ENCODE measurements at regions of chr3 and their contacts with region 1.

Region 1: GRCh38 chr3:66450390-66451022 is 50.3 kb downstream of the LRIG1 start:
- DNase-seq: peak; percentile 87
- H3K4me3 ChIP-seq: no peak overlapping the region
- H3K27ac ChIP-seq: peak overlapping the region; percentile 63 to 74
- H3K4me1 ChIP-seq: peaks cover 21% of the 10 kb centered on the region
- H3K27me3 ChIP-seq: no peaks in the 10 kb centered on the region
- CTCF ChIP-seq: no peak
- POLR2A ChIP-seq: no peak

Region 2: GRCh38 chr3:66236281-66236680 is 214.2 kb before region 1 on chr3:
- intact Hi-C with region 1: no loop called
- DNase-seq: no peak
- H3K4me3 ChIP-seq: no peak overlapping the region
- H3K27ac ChIP-seq: no peak overlapping the region
- H3K4me1 ChIP-seq: no peaks in the 10 kb centered on the region
- H3K27me3 ChIP-seq: no peaks in the 10 kb centered on the region
- CTCF ChIP-seq: no peak
- POLR2A ChIP-seq: no peak

Region 3: GRCh38 chr3:66276705-66277274 is 173.7 kb before region 1 on chr3:
- intact Hi-C with region 1: no loop called
- DNase-seq: peak; percentile 59
- H3K4me3 ChIP-seq: no peak overlapping the region
- H3K27ac ChIP-seq: no peak overlapping the region
- H3K4me1 ChIP-seq: no peaks in the 10 kb centered on the region
- H3K27me3 ChIP-seq: no peaks in the 10 kb centered on the region
- CTCF ChIP-seq: peak in 3 of 4 experiments; percentile 57 to 74 (median 58)
- POLR2A ChIP-seq: no peak

Region 4: DNA sequence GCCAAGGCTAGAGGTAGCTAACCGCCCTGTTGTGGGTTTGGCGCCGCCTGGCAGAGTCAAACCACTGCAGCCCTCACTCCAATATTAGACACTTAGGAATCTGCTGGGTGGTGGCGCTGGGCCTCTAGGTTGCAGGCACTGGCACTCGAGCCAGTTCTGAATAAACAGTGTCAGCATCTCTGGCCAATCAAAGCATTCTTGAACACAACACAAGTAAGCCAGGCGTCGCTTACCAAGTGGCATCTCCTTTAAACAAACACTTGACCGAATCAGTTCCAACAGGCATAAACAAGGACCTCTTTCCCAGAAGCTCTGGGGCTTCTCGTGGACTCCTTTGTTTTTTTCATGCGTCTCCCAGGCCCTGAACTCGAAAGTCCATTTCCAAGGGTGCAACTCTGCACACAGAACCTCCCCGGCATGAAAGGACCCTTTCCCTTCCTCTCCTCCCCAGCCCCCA is 32.0 kb before region 1 on chr3:
- intact Hi-C with region 1: loop called (anchors 5 kb)
- DNase-seq: peak; percentile 91
- H3K4me3 ChIP-seq: no peak overlapping the region
- H3K27ac ChIP-seq: peak overlapping the region; percentile 62 to 75
- H3K4me1 ChIP-seq: peaks cover 36% of the 10 kb centered on the region
- H3K27me3 ChIP-seq: no peaks in the 10 kb centered on the region
- CTCF ChIP-seq: peak in 3 of 4 experiments; percentile 23 to 64 (median 62)
- POLR2A ChIP-seq: no peak

Region 5: DNA sequence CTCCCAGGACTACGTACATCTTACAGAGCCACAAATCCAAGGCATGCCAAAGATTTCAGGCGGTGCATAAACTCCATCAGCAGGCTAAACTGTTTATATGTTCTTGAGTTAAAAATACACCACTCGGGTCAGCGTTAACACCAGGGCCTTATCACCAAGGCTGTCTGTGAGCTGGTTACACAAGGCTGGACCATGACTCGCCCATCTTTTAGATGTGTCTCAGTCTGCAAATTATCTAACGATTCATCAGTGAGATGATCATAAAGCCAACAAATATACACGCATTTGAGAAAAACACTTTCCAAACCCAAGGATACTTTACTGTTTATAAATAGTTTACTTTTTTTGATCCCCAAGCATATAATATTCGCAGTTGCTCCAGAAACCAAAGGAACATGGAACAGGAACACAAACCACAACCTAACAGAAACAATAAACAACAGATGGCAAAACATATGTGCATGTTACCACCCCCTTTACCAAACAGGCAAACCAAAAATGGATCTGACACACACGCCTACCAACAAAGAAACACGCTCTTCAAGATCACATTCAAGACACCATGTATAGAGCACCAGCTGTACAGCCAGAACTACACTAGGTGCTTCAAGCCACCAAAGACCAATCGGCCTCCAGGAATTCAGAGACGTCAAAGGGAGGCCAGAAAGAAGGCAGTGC is 34.9 kb after region 1 on chr3:
- intact Hi-C with region 1: loop called (anchors 5 kb)
- DNase-seq: no peak
- H3K4me3 ChIP-seq: no peak overlapping the region
- H3K27ac ChIP-seq: peak overlapping the region; percentile 7 to 97
- H3K4me1 ChIP-seq: peaks cover 28% of the 10 kb centered on the region
- H3K27me3 ChIP-seq: no peaks in the 10 kb centered on the region
- CTCF ChIP-seq: no peak
- POLR2A ChIP-seq: no peak

Region 6: DNA sequence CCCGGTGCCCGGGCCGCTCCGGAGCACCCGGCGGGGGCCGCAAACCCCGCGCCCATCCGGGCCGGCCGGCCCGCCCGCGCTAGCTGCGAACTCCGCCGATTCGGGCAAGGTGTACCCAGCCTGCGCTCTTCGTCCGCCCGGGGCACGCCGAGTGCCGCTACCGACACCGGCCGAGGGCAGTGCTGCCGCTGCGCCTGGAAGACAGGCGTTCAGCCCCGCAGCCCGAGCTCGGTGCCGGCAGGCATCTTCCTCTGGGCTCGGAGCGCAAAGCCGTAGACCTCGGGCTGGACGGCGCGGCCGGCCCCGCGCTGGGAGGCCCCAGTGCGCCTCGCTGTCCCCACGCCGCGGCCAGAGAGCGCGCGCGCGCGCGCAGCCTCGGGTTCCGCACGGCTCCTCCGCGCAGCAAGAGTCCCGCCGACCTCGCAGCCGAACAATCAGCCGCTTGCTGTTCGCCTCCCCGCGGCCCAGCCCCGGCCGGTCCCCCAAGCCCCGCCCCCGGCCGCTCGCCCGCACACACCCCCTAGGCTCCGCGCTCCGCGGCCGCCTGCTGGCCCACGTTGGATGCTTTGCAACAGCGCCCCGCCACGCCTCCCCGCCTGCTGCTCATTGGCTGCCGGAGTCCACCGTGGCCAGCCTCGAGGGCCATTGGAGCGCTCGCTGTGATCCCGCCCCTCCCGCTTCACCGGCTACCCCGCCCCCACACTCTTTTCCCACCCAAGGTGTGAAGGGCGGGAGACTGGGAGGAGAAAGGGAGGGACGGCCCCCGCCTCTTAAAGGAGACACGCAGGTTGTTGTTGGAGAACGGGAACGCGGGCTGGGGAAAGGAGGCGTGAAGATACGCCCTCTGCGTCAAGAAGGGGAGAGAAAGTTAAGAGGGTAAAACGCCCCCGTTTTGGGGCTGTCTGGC is 50.3 kb after region 1 on chr3 and contains the start of gene LRIG1:
- intact Hi-C with region 1: loop called (anchors 5 kb)
- DNase-seq: peak; percentile 100
- H3K4me3 ChIP-seq: peak within 1 kb of the TSS; percentile 98 to 99
- H3K27ac ChIP-seq: peak within 1 kb of the TSS; percentile 92 to 97
- H3K4me1 ChIP-seq: peaks cover under 1% of the 10 kb centered on the region
- H3K27me3 ChIP-seq: no peaks in the 10 kb centered on the region
- CTCF ChIP-seq: peak; percentile 33 to 63 (median 50)
- POLR2A ChIP-seq: peak; percentile 86
- total RNA-seq, gene LRIG1: 119 to 186 TPM

Measured in prostate gland (tissue), 2 donors.